ENCODE measurements at regions of chr10 and their contacts with region 1.

Region 1: DNA sequence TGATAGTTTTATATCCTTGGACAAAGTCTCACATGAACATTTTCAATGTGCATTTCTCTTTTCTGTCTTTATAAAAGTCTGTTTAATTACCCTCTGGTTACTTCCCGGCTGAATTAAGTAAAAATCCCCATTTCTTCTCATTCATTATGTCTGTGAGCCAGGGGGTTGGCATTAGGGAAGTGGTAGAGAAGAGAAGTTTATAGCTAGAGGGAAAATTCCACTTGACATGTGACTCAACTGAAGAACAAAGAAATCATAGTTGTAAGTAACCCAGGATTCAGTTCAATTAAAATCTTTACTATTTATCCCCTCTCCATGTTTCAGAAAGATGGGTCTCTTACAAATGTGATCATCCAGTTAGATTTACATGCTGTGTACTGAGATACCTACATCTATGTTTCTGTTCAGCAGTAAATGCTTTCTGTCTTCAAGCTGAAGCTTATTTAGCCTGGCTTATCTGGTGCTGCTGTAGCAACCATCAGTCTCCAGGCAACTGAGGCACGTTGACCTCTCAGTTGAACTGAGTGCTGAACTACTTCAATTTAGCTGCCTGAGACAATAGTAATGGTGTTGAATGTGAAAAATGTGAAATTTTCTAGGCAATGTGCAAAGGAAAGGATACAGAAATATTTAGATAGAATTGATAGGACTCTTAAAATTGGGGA is 181.6 kb downstream of the MLLT10 start:
- DNase-seq: no peak
- H3K4me3 ChIP-seq: no peak overlapping the region
- H3K27ac ChIP-seq: no peak overlapping the region
- H3K4me1 ChIP-seq: no peaks in the 10 kb centered on the region
- H3K27me3 ChIP-seq: no peaks in the 10 kb centered on the region
- CTCF ChIP-seq: no peak
- POLR2A ChIP-seq: no peak

Region 2: DNA sequence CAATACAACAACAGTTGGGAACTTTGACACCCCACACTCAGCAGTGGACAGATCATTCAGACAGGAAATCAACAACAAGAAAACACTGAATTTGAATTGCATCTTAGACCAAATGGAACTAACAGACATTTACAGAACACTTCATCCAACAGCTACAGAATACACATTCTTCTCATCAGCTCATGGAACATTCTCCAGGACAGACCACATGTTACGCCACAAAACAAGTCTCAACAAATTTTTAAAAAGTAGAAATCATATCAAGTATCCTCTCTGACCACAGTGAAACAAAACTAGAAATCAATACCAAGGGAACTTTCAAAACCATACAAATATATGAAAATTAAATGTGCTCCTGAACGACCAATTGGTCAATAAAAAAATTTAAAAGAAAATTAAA is 75.6 kb after region 1 on chr10:
- CTCF ChIA-PET with region 1: no interaction called
- POLR2A ChIA-PET with region 1: no interaction called
- dilution Hi-C with region 1: no loop called
- intact Hi-C with region 1: loop called (anchors 2 kb)
- DNase-seq: no peak
- H3K4me3 ChIP-seq: no peak overlapping the region
- H3K27ac ChIP-seq: no peak overlapping the region
- H3K4me1 ChIP-seq: no peaks in the 10 kb centered on the region
- H3K27me3 ChIP-seq: no peaks in the 10 kb centered on the region
- CTCF ChIP-seq: no peak
- POLR2A ChIP-seq: no peak